PC-3 (cell line): ENCODE measurements at regions of chr17 and their contacts with region 1.

Region 1: DNA sequence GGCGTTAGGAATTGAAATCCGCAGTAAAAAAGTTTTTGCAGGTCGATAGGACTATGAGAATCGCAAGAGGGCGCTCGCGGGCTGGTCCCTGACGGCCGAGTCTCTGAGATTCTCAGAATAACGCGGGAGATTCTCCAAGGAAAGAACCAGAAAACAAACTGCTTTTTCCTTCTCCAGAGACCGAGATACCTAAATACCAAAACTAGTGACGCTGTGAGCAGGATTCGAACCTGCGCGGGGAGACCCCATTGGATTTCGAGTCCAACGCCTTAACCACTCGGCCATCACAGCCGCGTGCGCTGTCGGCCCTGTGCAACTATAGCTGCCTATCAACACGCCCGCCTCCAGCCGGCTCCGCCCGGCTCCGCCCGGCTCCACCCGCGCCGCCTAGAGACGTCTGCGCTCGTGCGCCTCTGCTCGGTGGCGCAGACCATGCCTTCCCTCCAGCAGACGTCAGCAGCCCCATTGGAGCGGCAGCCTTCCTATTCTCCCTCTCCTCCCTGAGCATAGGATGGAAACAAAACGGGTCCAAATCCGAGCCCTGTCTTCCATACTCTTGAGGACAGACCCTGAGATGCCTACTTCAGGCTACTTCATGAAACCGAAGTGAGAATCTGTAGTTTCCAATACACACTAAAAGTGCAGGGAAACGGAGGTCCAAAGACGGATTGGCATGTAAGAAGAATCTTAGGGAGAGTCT is 13.4 kb downstream of the PER1 start:
- DNase-seq: peak; percentile 97
- ATAC-seq: peak; percentile 90
- H3K4me3 ChIP-seq: peak overlapping the region; percentile 77
- H3K27ac ChIP-seq: peak overlapping the region; percentile 75
- H3K4me1 ChIP-seq: peaks cover 6% of the 10 kb centered on the region
- H3K27me3 ChIP-seq: no peaks in the 10 kb centered on the region
- CTCF ChIP-seq: peak; percentile 76

Region 2: DNA sequence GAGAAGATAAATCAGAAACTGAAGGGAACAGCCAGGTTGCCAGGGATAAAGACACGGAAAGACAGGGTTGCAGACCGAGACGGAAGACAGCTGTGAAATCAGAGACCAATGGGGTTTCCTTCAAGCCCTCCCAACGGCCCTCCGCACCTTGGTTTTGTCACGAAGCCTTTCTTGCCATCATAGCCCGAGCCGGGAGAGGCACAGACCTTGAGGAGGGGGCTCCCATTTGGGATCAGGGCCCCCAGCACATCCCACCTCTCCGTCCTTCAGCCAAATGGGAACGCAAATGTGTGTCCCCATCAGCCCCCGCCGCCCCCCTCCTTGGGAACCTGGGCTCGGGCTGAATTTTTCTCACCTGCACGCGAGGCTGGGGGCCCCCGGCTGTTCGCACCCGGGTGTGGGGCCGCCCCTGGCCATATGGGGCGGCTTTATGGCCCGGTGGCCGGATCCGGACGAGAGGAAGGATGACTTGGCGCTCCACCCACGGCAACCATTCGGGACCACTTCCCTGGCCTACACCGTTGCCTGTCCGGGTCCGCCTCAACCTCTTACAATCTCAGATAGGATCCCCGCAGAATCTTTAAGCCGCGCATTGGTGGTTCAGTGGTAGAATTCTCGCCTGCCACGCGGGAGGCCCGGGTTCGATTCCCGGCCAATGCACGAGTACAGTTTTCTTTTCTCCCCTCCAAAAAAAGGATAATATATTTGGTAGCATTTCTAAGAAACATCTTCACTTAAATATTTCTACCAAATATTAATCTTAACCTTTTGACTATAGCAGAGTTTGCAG is 13.5 kb before region 1 on chr17:
- CTCF ChIA-PET with region 1: no interaction called
- POLR2A ChIA-PET with region 1: no interaction called
- intact Hi-C with region 1: loop called (anchors 1 kb)
- DNase-seq: peak; percentile 76
- ATAC-seq: peak; percentile 13; the same call in 1 of the 2 replicates
- H3K4me3 ChIP-seq: peak overlapping the region; percentile 91
- H3K27ac ChIP-seq: no peak overlapping the region
- H3K4me1 ChIP-seq: peaks cover 10% of the 10 kb centered on the region; the same call in 1 of the 2 replicates
- H3K27me3 ChIP-seq: no peaks in the 10 kb centered on the region
- CTCF ChIP-seq: no peak

Region 3: DNA sequence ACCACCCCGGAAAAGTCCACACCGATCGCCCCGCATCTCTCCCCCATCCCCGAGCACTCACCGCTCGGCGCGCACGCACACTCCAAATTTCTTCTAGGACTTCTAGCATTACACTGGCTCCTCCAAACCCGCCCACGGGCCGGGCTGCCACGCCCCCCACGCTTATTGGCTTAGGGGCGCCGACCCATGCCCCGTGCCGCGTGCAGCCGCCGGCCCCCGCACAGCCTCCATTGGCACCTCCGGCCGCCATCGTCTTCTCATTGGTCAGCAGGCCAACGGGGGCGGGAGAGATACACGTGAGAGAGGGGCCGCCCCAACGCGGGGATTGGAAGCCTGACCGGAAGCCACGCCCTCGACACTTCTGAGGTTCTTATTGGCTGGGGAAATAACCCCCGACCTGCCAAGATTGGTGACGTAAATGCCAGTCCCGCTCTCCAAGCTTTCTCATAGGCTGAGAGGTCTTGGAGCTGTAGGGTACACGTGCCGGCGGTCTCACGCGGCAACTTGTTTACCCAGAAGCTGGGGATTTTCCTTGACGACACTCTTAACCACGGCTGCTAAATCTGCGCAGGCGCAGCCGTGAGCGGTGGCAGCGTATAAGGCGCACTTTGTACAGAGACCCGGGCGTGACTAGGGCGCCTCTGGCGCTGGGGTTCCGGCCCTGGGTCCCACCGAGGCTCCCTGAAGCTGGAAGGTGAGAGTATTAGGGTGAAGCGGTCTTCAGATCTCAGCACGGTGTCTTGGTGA is 17.6 kb after region 1 on chr17:
- CTCF ChIA-PET with region 1: no interaction called
- POLR2A ChIA-PET with region 1: no interaction called
- intact Hi-C with region 1: loop called (anchors 1 kb)
- DNase-seq: peak; percentile 99
- ATAC-seq: peak; percentile 65
- H3K4me3 ChIP-seq: peak overlapping the region; percentile 93
- H3K27ac ChIP-seq: peak overlapping the region; percentile 77
- H3K4me1 ChIP-seq: peaks cover 42% of the 10 kb centered on the region
- H3K27me3 ChIP-seq: no peaks in the 10 kb centered on the region
- CTCF ChIP-seq: no peak

Region 4: GRCh38 chr17:8173056-8173870 is 34.4 kb after region 1 on chr17:
- CTCF ChIA-PET with region 1: no interaction called
- POLR2A ChIA-PET with region 1: interaction called, 3 read pairs
- intact Hi-C with region 1: loop called (anchors 5 kb)
- DNase-seq: peak; percentile 95
- ATAC-seq: peak; percentile 76
- H3K4me3 ChIP-seq: peak overlapping the region; percentile 65
- H3K27ac ChIP-seq: peak overlapping the region; percentile 94
- H3K4me1 ChIP-seq: peaks cover 18% of the 10 kb centered on the region
- H3K27me3 ChIP-seq: no peaks in the 10 kb centered on the region
- CTCF ChIP-seq: no peak

Region 5: GRCh38 chr17:8222630-8223356 is 84.0 kb after region 1 on chr17:
- CTCF ChIA-PET with region 1: no interaction called
- POLR2A ChIA-PET with region 1: no interaction called
- intact Hi-C with region 1: loop called (anchors 5 kb)
- DNase-seq: peak; percentile 88
- ATAC-seq: peak; percentile 44
- H3K4me3 ChIP-seq: peak overlapping the region; percentile 82
- H3K27ac ChIP-seq: peak overlapping the region; percentile 91
- H3K4me1 ChIP-seq: peaks cover 10% of the 10 kb centered on the region
- H3K27me3 ChIP-seq: no peaks in the 10 kb centered on the region
- CTCF ChIP-seq: no peak